Activated naive CD4-positive, alpha-beta T cell treated with anti-CD3 and anti-CD28 coated beads for 36 hours (primary cell): ENCODE measurements at regions of chr1 and their contacts with region 1.

Region 1: DNA sequence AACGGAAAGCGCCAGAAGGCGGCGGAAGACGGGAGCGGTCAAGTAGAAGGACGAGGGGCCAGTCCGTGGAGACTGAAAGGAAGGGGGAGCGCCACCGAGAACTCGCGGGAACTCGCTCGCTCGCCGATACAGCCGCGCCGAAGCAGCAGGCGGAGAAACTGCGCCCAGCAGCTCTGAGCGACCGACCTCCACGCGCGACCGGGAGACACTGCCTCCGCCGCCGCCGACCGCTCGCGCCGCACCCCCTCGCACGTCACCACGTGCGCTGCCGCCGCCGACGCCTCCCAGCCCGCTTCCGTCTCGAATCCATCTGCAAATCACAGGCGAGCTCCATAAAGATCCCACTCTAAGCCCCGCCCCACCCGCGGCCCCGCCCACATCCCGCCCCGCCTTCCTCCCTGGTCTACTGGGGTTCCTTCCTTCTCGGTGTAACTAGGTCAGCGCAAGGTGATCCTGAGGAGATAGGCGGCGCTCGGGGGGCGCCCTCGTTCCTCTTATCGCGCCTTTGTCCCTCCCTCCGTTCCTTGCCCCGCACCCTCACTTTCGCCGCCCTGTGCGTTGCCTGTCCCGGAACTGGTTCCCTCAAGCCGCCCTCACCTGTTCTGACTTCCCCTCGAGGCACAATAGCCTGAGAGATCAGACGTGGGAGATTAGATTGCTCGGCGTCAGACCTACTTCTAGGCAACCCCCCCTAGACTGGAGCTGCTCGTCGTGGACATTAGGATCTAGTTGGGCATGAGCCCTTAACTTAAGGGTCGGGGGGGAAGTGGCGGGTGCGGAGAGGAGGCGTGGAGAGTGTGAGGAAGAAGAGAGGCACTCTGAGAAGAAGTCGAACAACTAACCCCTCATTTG is at the start of gene IVNS1ABP:
- DNase-seq: peak; percentile 95
- H3K4me3 Mint-ChIP-seq: peak within 1 kb of the TSS; percentile 92
- H3K27ac Mint-ChIP-seq: peak within 1 kb of the TSS; percentile 94
- H3K4me1 Mint-ChIP-seq: peaks cover 40% of the 10 kb centered on the region
- H3K27me3 Mint-ChIP-seq: no peaks in the 10 kb centered on the region
- total RNA-seq, gene IVNS1ABP: 97.3 to 100 TPM

Region 2: DNA sequence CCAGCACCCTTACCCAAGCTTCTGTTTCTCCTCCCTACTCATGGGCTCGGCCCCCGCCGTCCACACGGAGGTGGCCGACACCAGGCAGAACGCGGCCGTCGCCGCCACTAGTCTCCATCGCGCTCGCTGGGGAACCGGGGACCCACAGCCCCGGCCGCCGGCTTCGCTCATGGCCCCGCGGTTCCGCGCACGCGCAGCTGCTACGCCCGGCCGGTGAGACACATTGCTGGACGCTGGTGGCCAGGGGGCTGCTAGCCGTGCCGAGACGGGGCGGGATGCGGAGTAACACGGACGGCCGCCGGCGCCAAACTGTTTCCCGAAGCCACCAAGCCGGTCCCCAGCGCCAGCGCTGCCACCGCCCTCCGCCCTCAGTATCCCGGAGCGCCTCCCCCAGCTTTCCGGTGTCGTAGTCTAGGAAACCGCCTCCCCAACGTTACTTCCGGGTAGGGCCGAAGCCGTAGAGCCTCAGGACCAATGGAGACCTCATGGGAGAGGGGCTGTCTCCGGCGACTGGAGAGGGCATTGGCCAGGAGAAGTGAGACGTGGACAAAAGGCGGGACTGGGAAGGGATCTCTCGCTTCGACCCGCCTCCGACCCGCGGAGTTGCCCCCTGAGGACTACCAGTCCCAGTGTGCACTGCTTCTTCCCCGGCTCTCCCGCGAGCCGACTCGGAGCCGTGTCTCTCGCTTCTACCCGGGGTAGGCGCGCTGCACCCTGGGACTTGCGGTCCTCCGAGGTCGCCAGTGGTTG is 562.6 kb before region 1 on chr1 and contains the start of gene EDEM3:
- CTCF ChIA-PET with region 1: no interaction called
- intact Hi-C with region 1: loop called (anchors 1 kb)
- DNase-seq: peak; percentile 98
- H3K4me3 Mint-ChIP-seq: peak within 1 kb of the TSS; percentile 88
- H3K27ac Mint-ChIP-seq: peak within 1 kb of the TSS; percentile 88
- H3K4me1 Mint-ChIP-seq: peaks cover 36% of the 10 kb centered on the region
- H3K27me3 Mint-ChIP-seq: no peaks in the 10 kb centered on the region
- total RNA-seq, gene EDEM3: 9.9 to 10.5 TPM

Region 3: DNA sequence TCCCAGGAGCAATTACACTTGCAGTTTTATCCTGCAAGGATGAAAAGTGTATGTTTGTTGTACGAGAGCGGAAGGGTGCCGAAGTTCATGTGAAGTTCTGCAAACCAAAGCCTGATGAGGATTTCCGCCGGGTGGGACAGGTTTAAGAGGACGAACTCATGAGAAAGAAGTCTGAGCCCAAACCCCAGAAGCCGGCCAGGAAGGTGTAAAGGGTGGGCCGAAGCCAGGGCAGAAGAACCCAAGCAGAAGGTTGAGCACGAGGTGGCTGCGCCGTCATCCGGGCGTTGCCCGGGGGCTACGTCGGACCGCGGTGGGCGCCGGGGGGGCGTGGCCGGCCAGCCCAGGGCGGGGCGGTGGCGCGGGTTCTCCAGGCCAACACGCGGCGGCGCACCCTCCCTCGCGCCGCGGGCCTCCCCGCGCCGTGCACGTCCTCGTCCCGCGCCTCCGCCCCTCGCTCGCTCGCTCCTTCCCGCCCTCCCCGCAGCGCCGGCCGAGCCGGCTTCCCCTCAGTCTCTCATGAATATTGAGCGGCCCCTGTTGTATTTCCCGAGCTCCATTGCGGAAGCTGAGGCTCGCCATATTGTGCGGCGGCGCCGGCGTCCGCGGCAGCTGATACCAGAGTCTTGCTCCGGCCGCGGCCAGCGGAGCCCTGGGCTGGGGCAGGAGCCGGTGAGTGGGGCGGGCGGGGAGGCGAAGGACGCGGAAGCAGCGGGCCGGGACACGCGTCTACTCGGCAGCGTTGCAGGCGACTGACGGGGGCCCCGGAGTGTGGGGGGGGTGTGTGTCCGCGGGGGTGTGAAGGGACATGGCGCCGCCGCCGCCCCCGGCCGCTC is 272.1 kb before region 1 on chr1 and contains the start of gene RNF2:
- CTCF ChIA-PET with region 1: no interaction called
- intact Hi-C with region 1: loop called (anchors 1 kb)
- DNase-seq: peak; percentile 83
- H3K4me3 Mint-ChIP-seq: peak within 1 kb of the TSS; percentile 89
- H3K27ac Mint-ChIP-seq: peak within 1 kb of the TSS; percentile 69
- H3K4me1 Mint-ChIP-seq: peaks cover 30% of the 10 kb centered on the region
- H3K27me3 Mint-ChIP-seq: no peaks in the 10 kb centered on the region
- total RNA-seq, gene RNF2: 19.2 to 23.4 TPM

Region 4: DNA sequence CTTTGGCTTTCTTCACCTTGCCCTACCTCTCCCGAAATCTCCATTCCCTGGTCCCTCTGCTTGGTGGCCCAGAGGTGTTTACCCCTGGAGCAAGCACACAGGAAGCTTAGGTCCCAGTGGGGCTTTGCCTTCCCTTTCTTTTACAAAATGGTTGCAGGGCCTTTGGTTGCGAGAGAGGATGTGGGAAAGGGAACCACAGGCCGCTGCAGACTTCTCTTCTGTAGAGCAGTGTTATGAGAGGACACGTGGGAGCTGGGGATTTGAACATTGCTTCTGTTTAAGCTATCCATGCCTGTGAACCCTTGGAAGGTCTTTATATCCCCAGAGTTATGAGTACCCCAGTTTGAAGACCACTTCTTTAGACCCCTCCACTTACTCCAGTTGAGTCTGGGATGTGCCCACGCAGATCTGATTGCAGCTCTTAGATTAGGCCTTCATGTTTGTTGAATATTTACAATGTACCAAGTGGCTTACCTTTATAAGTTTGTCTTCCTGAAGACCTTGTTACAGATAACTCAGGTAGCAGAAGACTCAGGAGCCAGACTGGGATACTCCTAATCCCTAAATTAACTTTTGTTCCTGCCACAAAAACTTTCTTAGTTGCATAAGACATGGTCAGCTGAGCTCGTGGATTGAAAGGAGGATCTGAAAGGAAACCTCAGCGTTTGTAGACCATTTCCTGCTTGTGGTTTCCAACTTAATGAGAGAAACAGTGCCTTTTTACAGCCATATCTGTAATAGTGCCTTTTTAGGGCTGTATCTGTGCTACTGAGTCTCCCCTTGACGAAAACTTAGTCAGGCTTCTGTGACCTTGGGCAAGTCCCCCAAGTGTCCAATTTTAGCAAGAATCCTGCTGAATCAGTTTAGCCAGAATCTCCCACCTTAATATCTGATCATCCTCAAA is 21.7 kb after region 1 on chr1:
- CTCF ChIA-PET with region 1: interaction called, 4 read pairs
- intact Hi-C with region 1: loop called (anchors 1 kb)
- DNase-seq: peak; percentile 52
- H3K4me3 Mint-ChIP-seq: no peak overlapping the region
- H3K27ac Mint-ChIP-seq: no peak overlapping the region
- H3K4me1 Mint-ChIP-seq: peaks cover 19% of the 10 kb centered on the region
- H3K27me3 Mint-ChIP-seq: no peaks in the 10 kb centered on the region

Region 5: GRCh38 chr1:185595835-185596667 is 278.8 kb after region 1 on chr1:
- CTCF ChIA-PET with region 1: no interaction called
- intact Hi-C with region 1: loop called (anchors 1 kb)
- DNase-seq: peak; percentile 65
- H3K4me3 Mint-ChIP-seq: no peak overlapping the region
- H3K27ac Mint-ChIP-seq: no peak overlapping the region
- H3K4me1 Mint-ChIP-seq: peaks cover 19% of the 10 kb centered on the region
- H3K27me3 Mint-ChIP-seq: no peaks in the 10 kb centered on the region

Region 6: GRCh38 chr1:185694081-185694480 is 376.8 kb after region 1 on chr1:
- CTCF ChIA-PET with region 1: no interaction called
- intact Hi-C with region 1: loop called (anchors 1 kb)
- DNase-seq: peak; percentile 45
- H3K4me3 Mint-ChIP-seq: peak overlapping the region; percentile 65
- H3K27ac Mint-ChIP-seq: peak overlapping the region; percentile 22
- H3K4me1 Mint-ChIP-seq: peaks cover 12% of the 10 kb centered on the region
- H3K27me3 Mint-ChIP-seq: no peaks in the 10 kb centered on the region